B cell (primary cell): ENCODE measurements at regions of chr5 and their contacts with region 1.

Region 1: DNA sequence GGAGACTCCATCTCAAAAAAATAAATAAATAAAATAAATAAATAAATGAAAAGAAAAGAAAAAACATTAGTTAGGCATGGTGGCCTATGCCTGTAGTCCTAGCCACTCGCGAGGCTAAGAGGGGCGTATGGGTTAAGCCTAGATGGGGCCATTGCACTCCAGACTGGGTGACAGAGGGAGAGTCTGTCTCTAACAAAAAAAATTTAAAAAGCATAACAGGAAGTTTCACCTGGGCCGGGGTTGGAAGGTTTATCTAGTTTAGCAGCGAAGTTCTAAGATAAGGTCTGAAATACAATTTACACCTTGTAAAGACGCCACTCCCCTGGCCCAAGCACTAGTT is 18.0 kb downstream of the ZMAT2 start:
- DNase-seq: no peak
- ATAC-seq: no peak
- H3K4me3 ChIP-seq: no peak overlapping the region
- H3K4me3 Mint-ChIP-seq: no peak overlapping the region
- H3K27ac ChIP-seq: no peak overlapping the region
- H3K27ac Mint-ChIP-seq: no peak overlapping the region
- H3K4me1 ChIP-seq: no peaks in the 10 kb centered on the region
- H3K4me1 Mint-ChIP-seq: no peaks in the 10 kb centered on the region
- H3K27me3 ChIP-seq: peaks cover 0 to 4% (median 2%) of the 10 kb centered on the region in 4 experiments
- H3K27me3 Mint-ChIP-seq: peaks cover 6% of the 10 kb centered on the region
- CTCF ChIP-seq: no peak

Region 2: DNA sequence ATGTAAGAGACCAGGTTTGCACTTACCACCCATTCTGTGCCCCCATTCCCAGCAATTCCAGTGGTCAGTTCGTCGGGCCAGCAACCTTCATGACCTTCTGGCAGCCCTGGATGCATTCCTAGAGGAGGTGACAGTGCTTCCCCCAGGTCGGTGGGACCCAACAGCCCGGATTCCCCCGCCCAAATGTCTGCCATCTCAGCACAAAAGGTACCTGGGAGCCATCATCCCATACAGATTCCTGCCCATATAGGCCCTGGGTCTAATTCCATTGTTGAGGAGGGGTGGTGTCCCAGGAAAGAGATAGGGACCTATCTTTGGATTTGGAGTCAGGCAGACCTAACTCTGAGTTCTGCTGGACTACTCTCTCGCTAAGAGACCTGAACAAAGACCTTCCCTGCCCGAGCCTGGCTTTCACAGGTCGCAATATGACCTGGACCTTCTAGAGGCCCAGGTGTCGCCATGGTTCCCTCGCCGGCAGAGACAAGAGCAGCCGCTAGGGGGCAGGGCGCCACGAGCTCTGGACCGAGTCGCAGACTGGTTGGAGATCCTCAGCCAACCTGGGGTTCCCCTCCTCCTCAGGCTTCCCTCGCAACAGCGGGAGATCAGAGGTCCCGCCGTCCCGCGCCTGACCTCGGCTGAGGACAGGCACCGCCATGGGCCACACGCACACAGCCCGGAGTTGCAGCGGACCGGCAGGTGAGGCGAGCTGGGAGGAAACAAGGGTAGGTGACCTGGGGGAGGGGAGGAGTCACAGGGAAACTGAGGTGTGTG is 355.2 kb before region 1 on chr5:
- CTCF ChIA-PET with region 1: interaction called, 11 read pairs
- POLR2A ChIA-PET with region 1: no interaction called
- intact Hi-C with region 1: loop called (anchors 1 kb)
- DNase-seq: peak; percentile 84
- ATAC-seq: peak; percentile 94
- H3K4me3 ChIP-seq: peak overlapping the region in 3 of 5 experiments; percentile 15 to 48 (median 29)
- H3K4me3 Mint-ChIP-seq: peak overlapping the region; percentile 82
- H3K27ac ChIP-seq: no peak overlapping the region
- H3K27ac Mint-ChIP-seq: peak overlapping the region; percentile 46
- H3K4me1 ChIP-seq: peaks cover 4 to 7% of the 10 kb centered on the region in 2 donors
- H3K4me1 Mint-ChIP-seq: peaks cover 5% of the 10 kb centered on the region
- H3K27me3 ChIP-seq: no peaks in the 10 kb centered on the region
- H3K27me3 Mint-ChIP-seq: peaks cover 6% of the 10 kb centered on the region
- CTCF ChIP-seq: peak; percentile 97